Activated B cell treated with CpG ODN at 0.5 μM for 24 hours (primary cell): ENCODE measurements at regions of chr15 and their contacts with region 1.

Region 1: GRCh38 chr15:75327005-75327404 is 8.9 kb upstream of the COMMD4 start:
- DNase-seq: no peak
- ATAC-seq: no peak
- H3K4me3 Mint-ChIP-seq: no peak overlapping the region
- H3K27ac Mint-ChIP-seq: no peak overlapping the region
- H3K4me1 Mint-ChIP-seq: no peaks in the 10 kb centered on the region
- H3K27me3 Mint-ChIP-seq: peaks cover 4% of the 10 kb centered on the region
- CTCF ChIP-seq: no peak

Region 2: DNA sequence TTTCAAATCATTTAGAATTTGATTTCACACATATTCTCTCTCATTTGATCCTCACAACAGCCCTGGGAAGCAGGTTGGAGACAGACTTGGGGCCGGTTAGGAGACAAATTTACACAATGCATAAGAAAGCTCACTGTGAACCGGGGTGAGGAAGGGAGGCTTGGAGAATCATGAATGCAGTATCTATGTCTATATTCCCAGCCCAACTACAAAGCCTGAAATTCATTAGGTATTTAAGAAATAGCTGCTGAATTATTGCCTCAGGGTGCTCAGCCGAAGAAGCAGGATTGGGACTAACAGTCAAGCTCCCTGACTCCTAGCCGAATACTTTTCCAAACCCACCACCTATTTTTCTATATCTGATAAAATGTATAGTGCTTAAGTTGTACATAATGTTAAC is 77.3 kb before region 1 on chr15:
- CTCF ChIA-PET with region 1: no interaction called
- POLR2A ChIA-PET with region 1: no interaction called
- intact Hi-C with region 1: loop called (anchors 10 kb)
- DNase-seq: no peak
- ATAC-seq: no peak
- H3K4me3 Mint-ChIP-seq: no peak overlapping the region
- H3K27ac Mint-ChIP-seq: no peak overlapping the region
- H3K4me1 Mint-ChIP-seq: no peaks in the 10 kb centered on the region
- H3K27me3 Mint-ChIP-seq: peaks cover 22% of the 10 kb centered on the region
- CTCF ChIP-seq: no peak

Region 3: GRCh38 chr15:75597667-75598341 is 270.8 kb after region 1 on chr15:
- CTCF ChIA-PET with region 1: no interaction called
- POLR2A ChIA-PET with region 1: no interaction called
- intact Hi-C with region 1: no loop called
- DNase-seq: no peak
- ATAC-seq: no peak
- H3K4me3 Mint-ChIP-seq: no peak overlapping the region
- H3K27ac Mint-ChIP-seq: no peak overlapping the region
- H3K4me1 Mint-ChIP-seq: no peaks in the 10 kb centered on the region
- H3K27me3 Mint-ChIP-seq: no peaks in the 10 kb centered on the region
- CTCF ChIP-seq: no peak